ENCODE measurements at regions of chr11 and their contacts with region 1.

Region 1: DNA sequence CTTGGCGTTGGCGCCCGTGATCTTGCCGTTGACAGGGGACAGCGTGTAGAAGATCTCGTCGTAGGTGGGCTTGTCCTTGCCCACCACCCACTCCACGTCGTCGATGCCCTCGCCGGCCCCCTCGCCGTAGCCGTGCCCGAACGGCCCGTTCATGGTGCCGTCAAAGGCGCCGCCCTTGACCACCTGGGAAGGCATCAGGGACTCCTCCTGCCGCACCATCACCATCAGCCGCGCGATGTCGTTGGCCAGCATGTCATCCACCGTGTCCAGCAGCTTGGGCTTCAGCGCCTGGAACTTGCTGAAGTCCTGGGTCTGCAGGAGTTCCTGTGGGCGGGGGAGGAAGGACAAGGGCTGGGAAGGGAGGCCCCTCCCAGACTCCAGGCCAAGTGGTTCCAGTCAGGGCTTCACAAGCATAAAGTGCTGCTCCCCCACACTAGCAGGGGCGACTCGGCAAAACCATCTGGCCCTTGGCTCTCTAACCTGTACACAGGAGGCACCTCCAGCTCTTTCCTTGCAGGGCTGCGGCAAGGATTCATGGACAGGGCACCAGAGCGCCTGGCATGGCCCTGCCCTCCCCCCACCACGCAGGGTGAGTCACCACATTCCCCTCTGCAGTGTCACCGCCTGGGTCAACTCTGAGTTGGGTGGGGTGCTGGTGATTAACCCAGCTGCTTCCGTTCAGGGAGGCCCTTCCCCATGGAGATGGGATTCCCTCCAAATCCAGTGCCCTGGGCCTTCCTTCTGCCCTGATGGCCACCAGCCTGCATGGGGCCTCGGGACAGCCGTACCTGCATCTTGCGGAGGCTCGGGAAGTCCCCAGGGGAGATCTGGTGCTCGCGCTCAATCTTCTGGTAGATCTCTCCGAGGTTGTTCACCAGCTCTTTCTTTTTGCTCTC is 10.3 kb upstream of the CDC42BPG start:
- DNase-seq: peak; percentile 100
- ATAC-seq: peak; percentile 79
- H3K4me3 ChIP-seq: peak overlapping the region; percentile 36
- H3K27ac ChIP-seq: peak overlapping the region; percentile 96
- H3K4me1 ChIP-seq: peaks cover 56% of the 10 kb centered on the region
- H3K27me3 ChIP-seq: no peaks in the 10 kb centered on the region
- CTCF ChIP-seq: no peak

Region 2: DNA sequence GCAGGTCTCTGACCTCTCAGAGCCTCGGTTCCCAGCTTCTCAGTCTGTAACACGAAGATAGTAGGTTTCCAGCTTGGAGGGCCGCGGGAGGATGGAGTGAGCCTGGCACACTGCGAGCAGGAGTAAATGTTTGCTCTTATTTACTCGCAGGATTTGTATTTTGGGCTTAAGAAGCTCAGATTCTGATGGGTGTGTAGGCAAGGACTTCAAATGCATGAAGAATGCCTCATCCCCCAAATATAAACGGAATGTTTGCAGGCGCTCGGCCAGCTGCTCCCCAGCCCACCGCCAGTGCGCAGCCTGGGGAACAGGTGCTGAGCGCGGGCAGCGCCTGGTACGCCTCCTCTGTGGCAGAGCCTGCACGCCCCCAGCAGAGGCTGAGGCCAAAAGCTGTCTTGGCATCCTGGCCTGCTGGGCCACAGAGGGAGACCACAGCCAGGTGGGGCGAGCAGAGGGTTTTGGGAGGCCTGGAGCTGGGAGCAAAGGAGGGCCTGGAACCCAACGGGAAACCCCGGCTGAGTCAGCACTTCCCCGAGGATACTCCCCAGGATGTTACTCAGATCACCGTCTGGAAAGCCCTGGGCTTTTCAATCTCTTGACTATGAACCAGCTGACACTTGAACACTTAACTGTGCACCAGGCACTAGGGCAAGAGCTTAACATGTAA is 14.3 kb after region 1 on chr11:
- CTCF ChIA-PET with region 1: interaction called, 7 read pairs
- POLR2A ChIA-PET with region 1: interaction called, 23 read pairs
- intact Hi-C with region 1: loop called (anchors 1 kb)
- DNase-seq: peak; percentile 97
- ATAC-seq: peak; percentile 78
- H3K4me3 ChIP-seq: peak overlapping the region; percentile 31
- H3K27ac ChIP-seq: peak overlapping the region; percentile 81
- H3K4me1 ChIP-seq: peaks cover 81% of the 10 kb centered on the region
- H3K27me3 ChIP-seq: no peaks in the 10 kb centered on the region
- CTCF ChIP-seq: no peak

Region 3: DNA sequence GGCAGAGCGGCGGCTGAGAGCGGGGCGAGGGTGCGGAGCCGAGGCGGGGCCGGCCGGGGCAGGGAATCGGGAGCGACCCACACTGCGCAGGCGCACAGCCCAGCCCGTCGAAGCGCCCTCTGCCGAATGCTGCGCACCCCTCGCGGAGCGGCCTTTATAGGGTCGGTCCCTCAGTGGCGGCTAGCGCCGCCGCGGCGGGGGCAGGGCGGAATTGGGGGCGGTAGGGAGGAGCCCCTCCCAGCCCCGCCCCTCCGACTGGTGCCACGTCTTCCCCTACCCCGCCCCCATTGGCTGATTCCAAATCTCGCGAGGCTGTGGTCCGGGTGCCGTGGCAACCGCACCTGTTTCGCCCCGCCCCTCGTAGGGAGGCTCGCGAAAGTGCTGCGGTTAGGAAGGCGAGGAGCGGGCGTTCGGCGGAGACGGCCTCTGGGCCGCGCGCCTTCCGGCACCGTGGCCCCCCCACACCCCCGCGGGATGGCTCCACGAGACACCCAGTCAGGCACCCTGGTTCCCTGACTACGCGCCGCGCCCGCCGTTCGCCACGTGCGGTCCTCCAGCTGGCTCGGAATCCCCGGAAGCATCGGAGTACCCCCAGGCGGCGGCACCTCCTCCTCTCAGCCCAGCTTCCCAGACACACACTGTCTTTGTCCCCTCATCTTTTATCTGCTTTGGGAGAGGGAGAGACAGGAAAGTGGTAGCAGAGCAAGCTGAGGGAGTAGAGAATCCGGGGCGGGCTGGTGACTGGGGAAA is 23.9 kb after region 1 on chr11 and contains the start of gene EHD1:
- CTCF ChIA-PET with region 1: interaction called, 4 read pairs
- POLR2A ChIA-PET with region 1: interaction called, 7 read pairs
- intact Hi-C with region 1: loop called (anchors 2 kb)
- DNase-seq: peak; percentile 100
- ATAC-seq: peak; percentile 73
- H3K4me3 ChIP-seq: peak within 1 kb of the TSS; percentile 78
- H3K27ac ChIP-seq: peak within 1 kb of the TSS; percentile 52
- H3K4me1 ChIP-seq: peaks cover 29% of the 10 kb centered on the region
- H3K27me3 ChIP-seq: no peaks in the 10 kb centered on the region
- CTCF ChIP-seq: peak; percentile 62
- total RNA-seq, gene EHD1: 340 and 370 TPM in 2 replicates